ENCODE measurements at regions of chr11 and their contacts with region 1.

Region 1: GRCh38 chr11:77091146-77091940 is 11.3 kb upstream of the OMP start:
- DNase-seq: peak; percentile 77
- H3K4me3 Mint-ChIP-seq: no peak overlapping the region
- H3K27ac Mint-ChIP-seq: no peak overlapping the region
- H3K4me1 Mint-ChIP-seq: no peaks in the 10 kb centered on the region
- H3K27me3 Mint-ChIP-seq: no peaks in the 10 kb centered on the region
- CTCF ChIP-seq: peak; percentile 81

Region 2: DNA sequence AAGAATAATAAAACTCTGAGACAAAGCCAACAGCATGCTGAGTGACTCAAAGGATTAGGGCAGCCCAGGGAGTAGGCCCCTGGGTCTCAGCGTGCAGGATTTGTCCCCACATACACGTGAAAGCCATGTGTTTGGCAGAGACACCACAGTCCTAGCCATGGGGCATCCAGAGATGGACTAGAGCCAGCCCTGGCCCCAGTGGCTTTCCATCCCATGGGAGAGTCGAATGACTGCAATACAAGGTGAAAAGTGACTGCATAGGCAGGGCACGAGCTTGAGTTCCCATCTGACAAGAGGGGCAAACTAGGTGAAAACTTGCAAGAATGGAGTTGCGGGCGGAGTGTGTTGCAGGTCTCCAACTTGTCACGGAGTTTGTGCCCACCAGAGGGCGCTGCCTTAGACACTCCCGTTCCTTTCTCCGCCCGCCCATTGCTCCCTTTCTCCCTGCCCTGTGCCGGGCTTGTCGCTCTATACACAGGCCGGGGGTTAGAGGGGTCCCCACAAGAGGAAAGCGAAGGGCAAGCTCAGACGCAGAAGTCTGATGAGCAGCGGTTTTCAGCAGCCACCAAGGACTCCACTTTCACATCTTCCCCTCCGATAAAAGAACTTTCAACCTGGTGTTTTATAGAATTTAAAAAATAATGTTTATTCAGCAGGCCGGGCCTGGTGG is 284.0 kb before region 1 on chr11:
- CTCF ChIA-PET with region 1: interaction called, 37 read pairs
- POLR2A ChIA-PET with region 1: no interaction called
- intact Hi-C with region 1: loop called (anchors 5 kb)
- DNase-seq: peak; percentile 87
- H3K4me3 Mint-ChIP-seq: no peak overlapping the region
- H3K27ac Mint-ChIP-seq: no peak overlapping the region
- H3K4me1 Mint-ChIP-seq: peaks cover 37% of the 10 kb centered on the region
- H3K27me3 Mint-ChIP-seq: no peaks in the 10 kb centered on the region
- CTCF ChIP-seq: peak; percentile 84

Region 3: GRCh38 chr11:77053217-77054015 is 37.9 kb before region 1 on chr11:
- CTCF ChIA-PET with region 1: interaction called, 74 read pairs
- POLR2A ChIA-PET with region 1: interaction called, 3 read pairs
- intact Hi-C with region 1: no loop called
- DNase-seq: no peak
- H3K4me3 Mint-ChIP-seq: no peak overlapping the region
- H3K27ac Mint-ChIP-seq: no peak overlapping the region
- H3K4me1 Mint-ChIP-seq: no peaks in the 10 kb centered on the region
- H3K27me3 Mint-ChIP-seq: peaks cover under 1% of the 10 kb centered on the region
- CTCF ChIP-seq: no peak

Region 4: GRCh38 chr11:77073328-77074001 is 17.9 kb before region 1 on chr11:
- CTCF ChIA-PET with region 1: interaction called, 10 read pairs
- POLR2A ChIA-PET with region 1: interaction called, 3 read pairs
- intact Hi-C with region 1: no loop called
- DNase-seq: peak; percentile 76
- H3K4me3 Mint-ChIP-seq: no peak overlapping the region
- H3K27ac Mint-ChIP-seq: peak overlapping the region; percentile 74
- H3K4me1 Mint-ChIP-seq: peaks cover 11% of the 10 kb centered on the region
- H3K27me3 Mint-ChIP-seq: no peaks in the 10 kb centered on the region
- CTCF ChIP-seq: peak; percentile 19

Region 5: DNA sequence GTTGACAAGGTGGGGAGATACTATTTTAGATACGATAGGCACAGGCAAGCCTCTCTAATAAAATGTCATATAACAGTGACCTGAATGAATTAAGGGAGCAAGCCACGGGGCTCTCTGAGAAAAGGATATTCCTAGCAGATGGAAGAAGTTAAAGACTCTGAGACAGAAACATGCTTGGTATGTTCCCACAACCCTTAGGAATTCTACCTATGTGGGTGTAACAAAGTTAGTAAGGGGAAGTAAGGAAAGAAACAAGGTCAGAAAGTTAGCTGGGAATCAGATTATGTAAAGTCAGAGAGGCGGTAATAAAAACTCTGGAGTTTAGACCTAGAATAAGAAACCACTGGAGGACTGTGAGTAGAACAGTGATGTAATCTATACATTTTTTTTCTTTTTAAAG is 269.8 kb after region 1 on chr11:
- CTCF ChIA-PET with region 1: no interaction called
- POLR2A ChIA-PET with region 1: no interaction called
- intact Hi-C with region 1: no loop called
- DNase-seq: no peak
- H3K4me3 Mint-ChIP-seq: no peak overlapping the region
- H3K27ac Mint-ChIP-seq: no peak overlapping the region
- H3K4me1 Mint-ChIP-seq: peaks cover 7% of the 10 kb centered on the region
- H3K27me3 Mint-ChIP-seq: no peaks in the 10 kb centered on the region
- CTCF ChIP-seq: no peak